HCT116 (cell line): ENCODE measurements at regions of chr9 and their contacts with region 1.

Region 1: DNA sequence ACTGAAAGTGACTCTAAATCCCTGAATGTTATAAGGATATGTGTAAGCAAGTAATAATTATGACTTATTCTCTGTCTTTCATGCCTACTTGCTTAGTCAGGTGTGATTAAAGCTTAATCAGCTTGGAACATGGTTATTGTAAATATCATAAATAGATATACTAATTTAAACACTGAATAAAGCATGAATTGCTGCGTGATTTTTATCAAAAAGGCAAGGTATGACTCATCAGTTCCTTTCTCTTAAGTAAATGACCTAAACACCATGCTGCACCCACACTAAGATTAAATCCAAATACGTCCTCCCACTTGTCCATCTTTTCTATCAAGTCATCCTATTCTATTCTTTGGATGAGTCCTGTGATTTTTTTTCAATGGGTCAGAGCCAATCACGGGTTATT is 124.6 kb upstream of the MTAP start:
- DNase-seq: peak; percentile 99
- ATAC-seq: peak; percentile 76
- H3K4me3 ChIP-seq: no peak overlapping the region
- H3K27ac ChIP-seq: peak overlapping the region; percentile 99
- H3K4me1 ChIP-seq: peaks cover 90 to 99% of the 10 kb centered on the region in 2 experiments
- H3K27me3 ChIP-seq: no peaks in the 10 kb centered on the region
- CTCF ChIP-seq: 0 out of 6 replicates have a peak, but pooled peaks of 1 of the 3 experiments have one; percentile 4
- POLR2A ChIP-seq: no peak
- RAD21 ChIP-seq: peak; percentile 48

Region 2: GRCh38 chr9:21233258-21233657 is 444.6 kb before region 1 on chr9:
- CTCF ChIA-PET with region 1: no interaction called
- POLR2A ChIA-PET with region 1: no interaction called
- RAD21 ChIA-PET with region 1: no interaction called
- intact Hi-C with region 1: no loop called
- DNase-seq: no peak
- ATAC-seq: no peak
- H3K4me3 ChIP-seq: no peak overlapping the region
- H3K27ac ChIP-seq: no peak overlapping the region
- H3K4me1 ChIP-seq: no peaks in the 10 kb centered on the region
- H3K27me3 ChIP-seq: no peaks in the 10 kb centered on the region
- CTCF ChIP-seq: no peak
- POLR2A ChIP-seq: no peak
- RAD21 ChIP-seq: no peak

Region 3: DNA sequence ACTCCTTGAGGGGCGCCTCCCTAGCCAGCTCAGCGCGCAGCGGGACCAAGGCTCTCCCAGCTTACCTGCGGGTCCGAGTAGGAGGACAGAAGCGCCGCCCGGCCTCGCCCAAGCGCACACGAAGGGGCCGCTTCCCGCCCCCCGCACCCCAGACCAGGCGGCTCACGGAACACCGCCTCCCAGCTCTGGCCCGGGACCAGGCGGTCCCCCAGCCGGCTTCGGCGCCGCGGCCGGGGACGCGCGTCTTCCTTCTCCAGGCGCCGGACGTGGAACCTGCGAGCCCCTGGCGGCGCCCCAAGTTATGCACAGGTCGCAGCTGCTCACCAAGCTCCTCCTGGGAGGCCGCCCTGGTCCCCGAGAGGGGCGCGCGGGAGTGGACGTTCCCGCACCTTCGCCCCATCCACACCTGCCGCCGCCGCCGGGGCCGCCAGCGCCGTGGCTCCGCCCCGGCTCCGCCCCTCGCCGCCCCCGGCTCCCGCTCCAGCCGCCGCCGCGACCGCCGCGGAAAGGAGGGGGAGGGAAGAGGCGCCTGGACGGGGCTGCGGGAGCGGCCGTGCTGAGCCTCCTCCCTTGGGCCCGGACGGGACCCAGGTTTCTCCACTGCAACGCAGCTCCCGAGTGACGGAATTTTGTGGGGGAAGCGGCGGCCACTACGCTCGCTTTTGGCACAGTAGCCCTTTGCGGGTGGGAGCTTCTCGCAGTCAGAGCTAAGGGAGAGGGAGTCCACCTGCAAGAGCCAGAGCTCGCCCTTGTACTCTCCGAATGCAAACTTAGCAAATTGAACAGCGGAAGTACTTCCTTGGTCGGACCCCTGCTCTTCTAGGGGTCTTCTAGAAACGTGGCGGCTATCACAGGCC is 118.2 kb before region 1 on chr9:
- CTCF ChIA-PET with region 1: no interaction called
- POLR2A ChIA-PET with region 1: interaction called, 64 read pairs
- RAD21 ChIA-PET with region 1: no interaction called
- intact Hi-C with region 1: no loop called
- DNase-seq: no peak
- ATAC-seq: peak; percentile 86
- H3K4me3 ChIP-seq: peak overlapping the region; percentile 65 to 72
- H3K27ac ChIP-seq: peak overlapping the region; percentile 99
- H3K4me1 ChIP-seq: peaks cover 59 to 83% of the 10 kb centered on the region in 2 experiments
- H3K27me3 ChIP-seq: no peaks in the 10 kb centered on the region
- CTCF ChIP-seq: 0 out of 6 replicates have a peak, but pooled peaks of 1 of the 3 experiments have one; percentile 2
- POLR2A ChIP-seq: no peak
- RAD21 ChIP-seq: peak; percentile 33; the same call in 1 of the 2 replicates

Region 4: GRCh38 chr9:21576331-21577189 is 101.3 kb before region 1 on chr9:
- CTCF ChIA-PET with region 1: interaction called, 3 read pairs
- POLR2A ChIA-PET with region 1: interaction called, 154 read pairs
- RAD21 ChIA-PET with region 1: interaction called in 1 of 2 experiments, 5 read pairs
- intact Hi-C with region 1: no loop called
- DNase-seq: peak; percentile 93
- ATAC-seq: peak; percentile 76
- H3K4me3 ChIP-seq: peak overlapping the region in 1 of 2 experiments; percentile 8; a peak in 1 of 4 replicates
- H3K27ac ChIP-seq: peak overlapping the region; percentile 99
- H3K4me1 ChIP-seq: peaks cover 89 to 100% of the 10 kb centered on the region in 2 experiments
- H3K27me3 ChIP-seq: no peaks in the 10 kb centered on the region
- CTCF ChIP-seq: no peak
- POLR2A ChIP-seq: no peak
- RAD21 ChIP-seq: peak; percentile 33

Region 5: DNA sequence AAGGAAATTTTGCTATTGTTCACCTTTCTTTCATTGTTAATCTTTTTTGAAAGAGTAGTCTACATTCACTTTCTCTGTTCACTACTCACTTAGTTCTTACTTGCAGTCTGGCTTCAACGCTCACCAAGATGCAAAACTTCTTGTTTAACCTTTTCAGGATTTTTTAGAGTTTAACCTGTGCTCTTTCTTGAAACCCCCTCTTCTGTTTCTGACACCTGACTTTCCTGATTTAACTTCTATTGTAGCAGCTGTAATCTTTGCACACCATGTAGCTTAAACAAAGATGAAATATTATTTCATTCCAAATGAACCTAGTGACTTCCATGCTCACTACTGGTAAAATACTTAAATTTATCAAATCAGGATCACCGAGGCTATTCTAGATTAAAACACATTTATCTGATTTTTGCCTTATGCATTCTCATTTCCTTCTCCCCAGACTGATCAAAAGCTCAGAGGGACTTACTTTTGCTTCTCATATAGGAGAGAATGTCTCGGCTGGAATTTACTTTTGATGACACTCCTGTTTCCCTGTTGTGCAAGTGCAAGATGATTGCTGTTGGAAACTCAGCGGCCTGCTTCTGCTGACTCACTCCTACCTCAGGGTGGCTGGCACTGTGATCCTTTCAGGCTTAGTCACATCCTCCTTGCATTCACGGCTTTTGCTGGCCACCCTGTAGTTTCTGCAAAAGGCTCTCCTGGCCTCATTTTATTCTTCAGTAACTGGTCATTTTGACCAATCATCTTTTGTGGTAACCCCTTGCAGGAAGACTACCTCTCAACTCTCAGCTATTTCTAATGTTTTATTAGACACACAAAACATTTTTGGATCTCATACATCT is 86.4 kb before region 1 on chr9:
- CTCF ChIA-PET with region 1: no interaction called
- POLR2A ChIA-PET with region 1: interaction called, 65 read pairs
- RAD21 ChIA-PET with region 1: no interaction called
- intact Hi-C with region 1: loop called (anchors 2 kb)
- DNase-seq: peak; percentile 94
- ATAC-seq: peak; percentile 82
- H3K4me3 ChIP-seq: peak overlapping the region; percentile 51 to 66
- H3K27ac ChIP-seq: peak overlapping the region; percentile 99
- H3K4me1 ChIP-seq: peaks cover 64 to 98% of the 10 kb centered on the region in 2 experiments
- H3K27me3 ChIP-seq: no peaks in the 10 kb centered on the region
- CTCF ChIP-seq: no peak
- POLR2A ChIP-seq: no peak
- RAD21 ChIP-seq: peak; percentile 43; the same call in 1 of the 2 replicates

Region 6: GRCh38 chr9:21634951-21635350 is 42.9 kb before region 1 on chr9:
- CTCF ChIA-PET with region 1: no interaction called
- POLR2A ChIA-PET with region 1: no interaction called
- RAD21 ChIA-PET with region 1: no interaction called
- intact Hi-C with region 1: no loop called
- DNase-seq: no peak
- ATAC-seq: no peak
- H3K4me3 ChIP-seq: no peak overlapping the region
- H3K27ac ChIP-seq: no peak overlapping the region
- H3K4me1 ChIP-seq: no peaks in the 10 kb centered on the region
- H3K27me3 ChIP-seq: no peaks in the 10 kb centered on the region
- CTCF ChIP-seq: no peak
- POLR2A ChIP-seq: no peak
- RAD21 ChIP-seq: no peak

Region 7: DNA sequence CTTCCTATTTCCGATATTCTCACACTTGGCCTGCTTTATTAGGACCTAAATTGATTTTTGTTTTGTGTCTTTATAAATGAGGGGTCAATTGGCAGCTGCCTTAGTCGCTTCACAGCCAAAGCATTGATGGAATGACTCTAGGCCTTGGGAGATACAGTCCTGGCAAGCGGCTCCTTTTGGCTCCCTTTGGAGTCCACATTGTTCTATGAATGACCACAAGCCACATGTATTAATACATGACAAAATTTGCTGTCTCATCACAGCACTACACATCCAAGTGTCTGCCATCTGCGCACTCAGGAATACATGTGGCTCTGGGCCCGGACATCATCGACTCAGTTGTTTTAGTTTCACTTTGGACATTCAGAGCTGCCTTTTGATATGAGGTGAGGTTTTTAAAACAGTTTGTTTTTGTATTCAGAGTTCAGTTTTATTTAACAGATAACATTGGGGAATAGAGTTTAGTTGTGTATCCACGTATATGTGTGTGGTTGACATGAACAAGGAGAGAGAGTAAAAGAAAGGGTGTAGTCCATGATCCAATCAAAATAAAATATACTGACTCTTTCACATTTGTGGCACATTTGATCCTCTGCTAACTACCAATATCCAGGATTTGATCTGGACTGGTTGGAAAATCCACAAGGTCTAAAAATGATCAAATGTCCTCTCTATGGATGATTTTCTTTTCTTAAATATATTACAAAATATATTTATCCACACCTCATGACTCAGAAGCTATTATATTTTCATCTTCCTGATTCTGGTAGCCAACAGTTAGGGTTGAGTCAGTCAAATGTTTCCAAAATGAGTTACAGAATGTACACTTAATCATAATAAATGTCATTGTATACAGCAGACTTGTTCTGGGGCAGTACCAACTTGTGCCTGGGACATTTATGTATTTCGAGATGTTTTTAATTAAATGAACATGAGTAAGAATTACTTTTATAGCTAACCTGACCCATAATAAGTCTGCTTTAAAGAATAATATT is 10.6 kb after region 1 on chr9:
- CTCF ChIA-PET with region 1: no interaction called
- POLR2A ChIA-PET with region 1: interaction called, 40 read pairs
- RAD21 ChIA-PET with region 1: no interaction called
- intact Hi-C with region 1: no loop called
- DNase-seq: no peak
- ATAC-seq: no peak
- H3K4me3 ChIP-seq: peak overlapping the region in 1 of 2 experiments; percentile 11; a peak in 1 of 4 replicates
- H3K27ac ChIP-seq: peak overlapping the region; percentile 99
- H3K4me1 ChIP-seq: peaks cover 85 to 100% of the 10 kb centered on the region in 2 experiments
- H3K27me3 ChIP-seq: no peaks in the 10 kb centered on the region
- CTCF ChIP-seq: no peak
- POLR2A ChIP-seq: no peak
- RAD21 ChIP-seq: no peak

Region 8: DNA sequence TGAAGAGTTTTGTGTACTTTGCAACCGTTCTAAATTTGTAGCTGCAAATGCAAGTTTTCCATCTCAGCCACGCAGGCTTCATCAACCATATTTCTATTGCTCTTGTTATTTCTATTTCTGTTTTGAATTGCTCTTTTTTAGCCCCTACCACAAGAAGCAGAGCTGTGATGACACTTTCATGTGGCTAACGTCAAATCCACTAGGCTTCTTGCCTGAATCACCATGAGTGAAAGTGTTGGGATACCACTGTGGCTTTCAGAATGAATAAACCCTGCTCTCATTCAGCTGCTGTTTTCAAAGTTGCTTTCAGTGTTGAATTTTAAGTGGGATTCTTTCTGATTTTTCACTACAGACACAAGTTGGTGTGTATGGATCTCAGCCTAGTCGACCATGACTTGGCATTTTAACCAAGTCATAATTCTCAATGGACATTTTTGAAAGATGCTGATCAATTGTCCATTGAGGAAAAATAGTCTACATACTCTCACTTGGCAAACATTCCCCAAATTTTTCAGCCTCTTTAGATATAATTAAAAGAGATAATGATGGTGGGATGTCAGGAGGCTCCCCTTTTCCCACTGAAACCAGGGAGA is 83.6 kb after region 1 on chr9:
- CTCF ChIA-PET with region 1: no interaction called
- POLR2A ChIA-PET with region 1: no interaction called
- RAD21 ChIA-PET with region 1: no interaction called
- intact Hi-C with region 1: no loop called
- DNase-seq: no peak
- ATAC-seq: no peak
- H3K4me3 ChIP-seq: no peak overlapping the region
- H3K27ac ChIP-seq: no peak overlapping the region
- H3K4me1 ChIP-seq: peaks cover 5 to 16% of the 10 kb centered on the region in 2 experiments; a peak in 3 of 4 replicates
- H3K27me3 ChIP-seq: no peaks in the 10 kb centered on the region
- CTCF ChIP-seq: no peak
- POLR2A ChIP-seq: no peak
- RAD21 ChIP-seq: no peak

Region 9: DNA sequence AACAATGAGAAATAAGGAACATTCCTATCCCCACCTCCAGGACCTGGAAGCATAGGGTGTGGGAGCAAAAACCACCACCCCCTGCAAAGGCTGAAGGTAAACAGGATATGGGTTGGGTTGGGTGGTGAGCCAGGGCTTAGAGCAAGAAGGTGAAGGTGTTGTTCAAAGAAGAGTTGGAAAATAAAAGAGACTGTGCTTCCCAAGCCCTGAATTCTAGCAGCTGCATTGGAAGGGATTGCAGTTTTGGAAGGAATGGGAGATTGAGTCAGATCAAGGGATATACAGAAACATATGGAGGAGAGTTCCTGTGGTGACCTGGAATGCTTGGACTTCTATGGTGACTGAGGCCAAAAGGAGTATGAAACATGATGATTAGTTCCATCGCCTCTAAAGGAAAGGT is 99.9 kb after region 1 on chr9:
- CTCF ChIA-PET with region 1: no interaction called
- POLR2A ChIA-PET with region 1: interaction called, 71 read pairs
- RAD21 ChIA-PET with region 1: no interaction called
- intact Hi-C with region 1: no loop called
- DNase-seq: peak; percentile 73
- ATAC-seq: peak; percentile 79
- H3K4me3 ChIP-seq: peak overlapping the region; percentile 19 to 44
- H3K27ac ChIP-seq: peak overlapping the region; percentile 92
- H3K4me1 ChIP-seq: peaks cover 69 to 86% of the 10 kb centered on the region in 2 experiments
- H3K27me3 ChIP-seq: no peaks in the 10 kb centered on the region
- CTCF ChIP-seq: no peak
- POLR2A ChIP-seq: no peak
- RAD21 ChIP-seq: 0 out of 2 replicates have a peak, but pooled peaks have one; percentile 11